IMR-90 (cell line): ENCODE measurements at regions of chr11 and their contacts with region 1.

Region 1: DNA sequence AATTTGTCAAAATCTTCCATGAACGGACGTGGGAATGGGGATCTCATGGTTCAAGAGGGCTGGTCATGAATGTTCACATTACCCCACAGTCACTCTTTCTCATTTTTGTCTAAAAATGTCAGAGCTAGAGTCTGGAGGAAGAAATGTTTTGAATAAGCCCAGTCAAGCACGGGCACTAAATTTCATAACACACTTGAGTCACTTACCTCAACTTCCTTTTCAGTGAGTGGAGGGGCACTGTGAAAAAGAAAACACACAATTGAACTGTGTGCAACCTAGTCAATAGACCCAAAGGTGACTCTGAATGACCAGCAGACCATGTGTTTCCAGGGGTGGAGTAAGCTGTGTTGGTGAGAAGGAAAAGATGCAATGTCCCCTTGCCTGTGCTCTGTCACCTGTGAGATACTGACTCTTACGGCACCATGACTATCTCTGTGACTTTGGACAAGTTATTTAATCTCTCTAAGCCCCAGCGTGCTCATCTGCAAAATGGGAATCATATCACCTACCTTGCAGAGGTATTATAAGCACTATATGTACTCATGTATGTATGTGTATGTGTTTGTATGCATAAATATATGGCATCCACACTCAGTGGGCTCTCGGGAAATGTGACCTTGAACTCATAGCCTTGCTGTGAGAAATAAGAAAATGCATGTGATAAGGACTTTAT is 38.2 kb upstream of the LYVE1 start:
- DNase-seq: peak; percentile 86
- ATAC-seq: peak; percentile 59
- H3K4me3 ChIP-seq: no peak overlapping the region
- H3K27ac ChIP-seq: peak overlapping the region; percentile 93
- H3K4me1 ChIP-seq: peaks cover 29% of the 10 kb centered on the region
- H3K27me3 ChIP-seq: no peaks in the 10 kb centered on the region
- CTCF ChIP-seq: no peak
- POLR2A ChIP-seq: no peak
- RAD21 ChIP-seq: no peak

Region 2: GRCh38 chr11:10540923-10541560 is 65.6 kb before region 1 on chr11 and contains the start of gene RNF141:
- CTCF ChIA-PET with region 1: no interaction called
- POLR2A ChIA-PET with region 1: no interaction called
- dilution Hi-C with region 1: no loop called
- in situ Hi-C with region 1: no loop called
- intact Hi-C with region 1: loop called (anchors 2 kb)
- DNase-seq: peak; percentile 87
- ATAC-seq: peak; percentile 99
- H3K4me3 ChIP-seq: peak within 1 kb of the TSS; percentile 77
- H3K27ac ChIP-seq: peak within 1 kb of the TSS; percentile 79
- H3K4me1 ChIP-seq: peaks cover 2% of the 10 kb centered on the region
- H3K27me3 ChIP-seq: no peaks in the 10 kb centered on the region
- CTCF ChIP-seq: peak; percentile 86
- POLR2A ChIP-seq: peak; percentile 92
- RAD21 ChIP-seq: peak; percentile 49
- total RNA-seq, gene RNF141: 18.6 and 34.2 TPM in 2 replicates